ENCODE measurements at regions of chr1 and their contacts with region 1.

Region 1: DNA sequence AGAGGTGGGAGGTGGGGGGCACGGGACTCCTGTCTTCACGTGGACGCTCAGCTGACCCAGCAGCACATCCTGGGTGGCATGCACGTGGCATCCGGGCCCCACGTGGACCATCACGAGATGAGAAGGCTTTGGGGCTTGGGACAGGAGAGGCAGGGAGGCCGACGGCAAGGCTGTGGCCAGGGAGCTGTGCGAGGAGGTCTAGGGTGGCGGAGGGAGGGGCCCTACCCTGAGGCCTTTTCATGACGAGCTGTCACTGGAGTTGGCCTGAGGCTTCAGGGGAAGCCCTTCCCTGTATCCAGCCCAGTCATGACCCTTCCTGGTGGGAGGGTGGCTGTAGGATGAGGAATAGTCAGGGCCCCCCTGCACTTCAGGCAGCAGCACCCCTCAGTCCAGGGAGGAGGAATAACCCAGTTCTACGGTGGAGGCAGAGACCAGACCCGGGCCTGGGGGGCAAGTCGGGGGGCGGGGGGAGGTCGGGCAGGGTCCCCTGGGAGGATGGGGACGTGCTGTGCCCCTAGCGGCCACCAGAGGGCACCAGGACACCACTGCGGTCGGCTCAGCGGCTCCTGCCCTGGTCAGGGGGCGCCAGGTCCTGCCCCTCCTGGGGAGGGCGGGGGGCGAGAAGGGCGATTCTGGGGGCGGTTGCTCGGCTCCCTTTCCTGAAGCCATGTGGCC is 2.0 kb upstream of the PERM1 start:
- DNase-seq: peak; percentile 69
- ATAC-seq: peak; percentile 74
- H3K4me3 Mint-ChIP-seq: no peak overlapping the region
- H3K27ac Mint-ChIP-seq: no peak overlapping the region
- H3K4me1 Mint-ChIP-seq: no peaks in the 10 kb centered on the region
- H3K27me3 Mint-ChIP-seq: peaks cover 43% of the 10 kb centered on the region

Region 2: DNA sequence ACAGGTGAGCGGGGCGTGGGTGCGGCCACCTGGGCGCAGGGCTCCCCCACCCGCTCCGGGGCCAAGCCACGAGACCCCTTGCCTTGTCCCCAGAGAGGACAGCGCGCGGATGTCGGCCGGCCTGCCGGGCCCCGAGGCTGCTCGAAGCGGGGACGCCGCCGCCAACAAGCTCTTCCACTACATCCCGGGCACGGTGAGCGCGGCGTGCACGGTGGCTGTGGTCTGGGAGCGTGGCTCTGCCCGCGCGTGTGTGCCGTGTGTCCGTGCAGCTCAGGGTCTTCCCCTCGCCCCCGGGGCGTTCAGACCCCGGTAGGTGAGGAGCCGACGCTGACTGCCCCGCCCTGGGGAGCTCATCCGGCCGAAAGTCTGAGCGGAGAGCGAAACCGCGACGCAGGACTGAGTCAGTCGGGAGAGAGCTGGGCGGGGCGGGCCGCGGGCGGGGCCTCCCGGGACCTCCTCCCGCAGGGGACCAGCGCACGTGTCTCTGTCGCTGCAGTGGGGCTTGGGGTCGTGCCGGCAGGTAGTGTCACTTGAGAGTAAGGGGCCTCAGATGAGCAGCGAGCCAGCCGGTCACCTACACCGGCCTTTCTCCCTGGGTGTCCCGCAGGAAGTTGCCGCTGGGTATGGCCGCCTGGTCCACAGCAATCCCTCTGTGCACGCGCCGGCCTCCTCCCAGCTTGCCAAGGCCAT is 17.2 kb before region 1 on chr1:
- CTCF ChIA-PET with region 1: interaction called, 17 read pairs
- DNase-seq: peak; percentile 92
- ATAC-seq: peak; percentile 91
- H3K4me3 Mint-ChIP-seq: peak overlapping the region; percentile 79
- H3K27ac Mint-ChIP-seq: peak overlapping the region; percentile 85
- H3K4me1 Mint-ChIP-seq: peaks cover 15% of the 10 kb centered on the region
- H3K27me3 Mint-ChIP-seq: peaks cover 6% of the 10 kb centered on the region

Region 3: GRCh38 chr1:1019122-1019999 is 35.4 kb after region 1 on chr1:
- CTCF ChIA-PET with region 1: interaction called, 13 read pairs
- DNase-seq: peak; percentile 86
- ATAC-seq: peak; percentile 82
- H3K4me3 Mint-ChIP-seq: peak overlapping the region; percentile 61
- H3K27ac Mint-ChIP-seq: no peak overlapping the region
- H3K4me1 Mint-ChIP-seq: peaks cover 29% of the 10 kb centered on the region
- H3K27me3 Mint-ChIP-seq: peaks cover 12% of the 10 kb centered on the region

Measured in activated CD8-positive, alpha-beta memory T cell treated with anti-CD3 and anti-CD28 coated beads, Interleukin-2, amount 10 ng/mL, durations not matched to agents 7 days and 5 days (primary cell).